HCT116 (cell line): ENCODE measurements at regions of chr11 and their contacts with region 1.

Region 1: DNA sequence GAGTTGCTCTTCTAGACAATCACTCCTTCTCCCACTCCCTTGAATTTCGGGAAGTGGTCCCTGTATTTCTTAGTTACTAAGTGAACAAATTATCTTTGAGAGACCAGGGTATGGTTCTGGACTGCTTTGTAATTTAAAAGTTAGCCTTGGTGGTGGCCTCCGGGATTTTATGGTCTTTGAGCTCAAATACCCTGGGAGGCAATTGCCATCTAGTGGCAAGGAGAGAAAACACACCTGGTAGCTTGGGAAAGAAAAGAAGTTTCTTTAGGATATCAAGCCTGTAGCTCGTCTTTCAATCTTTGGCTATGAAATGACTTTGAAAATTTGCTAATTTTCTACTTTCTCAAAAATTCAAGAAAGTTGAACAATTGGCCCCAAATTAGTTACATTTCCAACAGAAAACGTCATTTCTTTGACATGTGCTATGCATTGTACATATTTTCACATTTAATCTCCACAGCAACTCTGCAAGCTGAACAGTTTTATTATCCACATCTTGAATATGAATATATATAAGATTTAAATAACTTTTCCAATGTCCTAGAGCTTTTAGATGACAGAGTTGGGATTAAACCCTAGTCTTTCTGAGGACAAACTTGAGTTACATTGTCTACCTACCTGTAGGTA is 39.1 kb downstream of the MMP27 start:
- DNase-seq: peak; percentile 37
- ATAC-seq: peak; percentile 74
- H3K4me3 ChIP-seq: no peak overlapping the region; a peak in 1 of 4 replicates
- H3K27ac ChIP-seq: no peak overlapping the region
- H3K4me1 ChIP-seq: peaks cover 0 to 12% of the 10 kb centered on the region in 2 experiments; a peak in 1 of 4 replicates
- H3K27me3 ChIP-seq: no peaks in the 10 kb centered on the region
- CTCF ChIP-seq: peak; percentile 82 to 92 (median 91)
- POLR2A ChIP-seq: no peak
- RAD21 ChIP-seq: peak; percentile 92

Region 2: DNA sequence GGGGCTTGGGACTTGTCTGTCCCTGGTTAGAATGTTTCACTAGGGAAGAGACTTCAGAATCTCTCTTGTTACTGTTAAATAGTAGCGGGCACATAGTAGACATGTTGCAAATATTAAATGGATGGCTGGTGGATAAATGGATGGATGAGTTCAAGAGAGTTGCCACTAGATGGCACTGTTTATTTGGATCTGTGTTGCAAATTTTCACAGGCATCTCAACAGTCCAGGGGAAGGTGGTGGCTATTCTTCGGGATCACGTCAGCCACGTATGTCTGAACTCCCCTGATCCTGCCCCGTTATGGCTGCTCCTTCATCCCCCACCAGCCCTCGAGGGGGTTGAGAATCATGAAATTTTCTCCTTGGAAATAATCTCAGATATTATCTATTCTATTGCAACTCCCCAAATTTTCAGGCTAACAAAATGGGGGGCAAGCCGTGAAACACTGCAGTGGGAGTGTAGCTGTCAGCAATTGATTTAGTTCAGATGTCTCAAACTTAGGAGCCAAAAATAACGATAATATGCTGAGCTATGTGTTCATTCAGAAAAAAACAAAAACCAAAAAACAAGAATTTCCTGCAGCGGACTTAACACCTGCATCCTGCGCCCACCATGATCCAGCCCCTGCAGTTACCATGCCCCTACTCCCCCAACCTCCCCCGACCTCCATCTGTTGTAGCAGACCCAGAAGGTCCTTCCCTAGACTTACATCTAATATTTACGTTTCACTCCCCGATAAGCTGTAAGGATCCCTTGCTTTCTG is 378.3 kb before region 1 on chr11:
- CTCF ChIA-PET with region 1: interaction called, 15 read pairs
- POLR2A ChIA-PET with region 1: no interaction called
- RAD21 ChIA-PET with region 1: interaction called in 1 of 2 experiments, 3 read pairs
- intact Hi-C with region 1: loop called (anchors 2 kb)
- DNase-seq: peak; percentile 69
- ATAC-seq: peak; percentile 93
- H3K4me3 ChIP-seq: peak overlapping the region in 1 of 2 experiments; percentile 31; a peak in 2 of 4 replicates
- H3K27ac ChIP-seq: no peak overlapping the region
- H3K4me1 ChIP-seq: peaks cover 0 to 12% of the 10 kb centered on the region in 2 experiments; a peak in 2 of 4 replicates
- H3K27me3 ChIP-seq: no peaks in the 10 kb centered on the region
- CTCF ChIP-seq: peak; percentile 55 to 81 (median 73)
- POLR2A ChIP-seq: no peak
- RAD21 ChIP-seq: peak; percentile 89

Region 3: GRCh38 chr11:102341844-102342318 is 324.6 kb before region 1 on chr11:
- CTCF ChIA-PET with region 1: interaction called, 34 read pairs
- POLR2A ChIA-PET with region 1: interaction called, 3 read pairs
- RAD21 ChIA-PET with region 1: interaction called, 5 to 12 read pairs
- intact Hi-C with region 1: loop called (anchors 5 kb)
- DNase-seq: peak; percentile 89
- ATAC-seq: peak; percentile 83
- H3K4me3 ChIP-seq: no peak overlapping the region
- H3K27ac ChIP-seq: no peak overlapping the region
- H3K4me1 ChIP-seq: peaks cover 2 to 29% of the 10 kb centered on the region in 2 experiments; a peak in 3 of 4 replicates
- H3K27me3 ChIP-seq: no peaks in the 10 kb centered on the region
- CTCF ChIP-seq: peak; percentile 77 to 87 (median 86)
- POLR2A ChIP-seq: no peak
- RAD21 ChIP-seq: peak; percentile 91

Region 4: DNA sequence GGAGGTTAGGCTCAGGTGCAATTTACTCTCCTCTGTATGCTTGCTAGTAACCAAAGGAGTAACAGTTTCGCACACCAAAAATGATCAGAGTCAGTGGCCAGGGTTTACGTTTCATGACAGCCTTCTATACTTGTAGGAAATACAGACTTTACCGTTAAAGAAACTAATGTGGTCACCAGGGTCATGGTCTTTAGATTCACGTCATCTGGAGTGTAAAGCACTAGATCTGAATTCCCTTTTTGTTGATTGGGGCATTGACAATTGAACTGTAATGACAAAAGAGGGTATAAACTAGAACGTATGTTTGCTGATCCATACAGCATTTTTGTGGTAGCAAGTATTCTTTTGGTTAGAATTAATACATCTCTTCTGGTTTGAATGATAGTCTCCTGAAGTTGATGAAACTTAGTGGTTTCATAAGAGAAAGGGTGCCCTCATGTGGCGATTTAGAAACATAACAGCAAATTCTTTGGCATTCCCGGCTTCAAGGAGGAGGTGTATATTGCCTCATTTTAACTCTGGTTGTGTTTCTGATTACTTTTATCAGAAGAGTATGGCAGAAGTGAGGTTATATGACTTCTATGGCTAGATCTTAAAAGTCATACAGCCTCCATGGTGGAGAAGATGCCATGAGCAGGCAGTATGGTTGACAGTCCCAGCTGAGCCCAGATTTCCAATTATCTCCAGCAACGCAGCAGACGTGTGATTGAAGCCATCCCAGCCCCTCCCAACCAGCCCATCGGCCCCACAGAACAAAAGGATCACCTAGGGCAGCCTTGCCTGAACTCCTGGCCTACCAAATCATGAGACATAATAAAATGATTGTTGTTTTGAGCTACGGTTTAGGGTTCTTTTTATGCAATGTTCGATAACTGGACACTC is 171.0 kb before region 1 on chr11:
- CTCF ChIA-PET with region 1: interaction called, 13 read pairs
- POLR2A ChIA-PET with region 1: no interaction called
- RAD21 ChIA-PET with region 1: interaction called in 1 of 2 experiments, 4 read pairs
- intact Hi-C with region 1: loop called (anchors 2 kb)
- DNase-seq: peak; percentile 81
- ATAC-seq: peak; percentile 81
- H3K4me3 ChIP-seq: peak overlapping the region; percentile 20 to 38
- H3K27ac ChIP-seq: no peak overlapping the region
- H3K4me1 ChIP-seq: peaks cover 13 to 35% of the 10 kb centered on the region in 2 experiments
- H3K27me3 ChIP-seq: no peaks in the 10 kb centered on the region
- CTCF ChIP-seq: peak; percentile 52 to 88 (median 79)
- POLR2A ChIP-seq: no peak
- RAD21 ChIP-seq: peak; percentile 95